Activated CD4-positive, alpha-beta T cell treated with anti-CD3 and anti-CD28 coated beads for 36 hours (primary cell): ENCODE measurements at regions of chr3 and their contacts with region 1.

Region 1: GRCh38 chr3:186540221-186540834 is 3.9 kb downstream of the CRYGS start:
- DNase-seq: peak; percentile 89
- ATAC-seq: peak; percentile 66
- H3K4me3 Mint-ChIP-seq: no peak overlapping the region
- H3K27ac Mint-ChIP-seq: peak overlapping the region; percentile 64
- H3K4me1 Mint-ChIP-seq: peaks cover 63% of the 10 kb centered on the region
- H3K27me3 Mint-ChIP-seq: no peaks in the 10 kb centered on the region

Region 2: GRCh38 chr3:185942907-185943759 is 597.2 kb before region 1 on chr3:
- CTCF ChIA-PET with region 1: interaction called, 36 read pairs
- POLR2A ChIA-PET with region 1: interaction called, 3 read pairs
- intact Hi-C with region 1: no loop called
- DNase-seq: peak; percentile 92
- ATAC-seq: peak; percentile 96
- H3K4me3 Mint-ChIP-seq: no peak overlapping the region
- H3K27ac Mint-ChIP-seq: no peak overlapping the region
- H3K4me1 Mint-ChIP-seq: peaks cover 22% of the 10 kb centered on the region
- H3K27me3 Mint-ChIP-seq: peaks cover 4% of the 10 kb centered on the region

Region 3: DNA sequence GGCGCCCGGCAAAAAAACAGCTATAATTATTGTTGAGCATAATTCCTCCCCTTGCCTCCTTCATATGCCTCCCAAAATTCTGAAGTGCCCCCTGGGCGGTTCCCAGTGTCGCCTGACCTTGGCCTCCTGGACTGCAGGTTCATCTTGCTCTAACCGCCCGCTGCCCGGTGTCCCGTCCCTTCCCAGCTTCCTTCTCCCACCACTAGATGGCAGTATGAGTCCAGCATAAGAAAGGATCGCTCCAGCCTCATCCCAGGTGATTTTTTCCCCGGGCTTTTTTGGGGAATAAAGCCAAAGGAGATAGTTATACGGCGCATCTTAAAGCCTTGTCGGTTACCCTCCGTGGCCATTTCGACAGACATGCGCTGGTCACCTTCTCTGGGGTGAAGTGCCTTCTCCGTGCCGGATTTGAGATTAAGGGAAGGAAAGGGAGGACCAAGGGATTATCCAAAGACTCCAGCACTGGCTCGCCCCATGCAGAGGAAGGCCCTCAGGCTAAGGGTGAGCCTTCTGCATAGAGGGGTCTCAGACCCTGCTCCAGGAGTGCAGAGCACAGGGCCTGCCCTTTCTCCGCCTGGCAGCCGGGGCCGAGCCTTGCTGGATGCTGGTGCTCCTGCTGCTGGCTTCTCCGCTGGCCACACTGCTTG is 556.7 kb before region 1 on chr3:
- CTCF ChIA-PET with region 1: interaction called, 38 read pairs
- POLR2A ChIA-PET with region 1: no interaction called
- intact Hi-C with region 1: loop called (anchors 1 kb)
- DNase-seq: peak; percentile 71
- ATAC-seq: peak; percentile 83
- H3K4me3 Mint-ChIP-seq: no peak overlapping the region
- H3K27ac Mint-ChIP-seq: no peak overlapping the region
- H3K4me1 Mint-ChIP-seq: peaks cover 4% of the 10 kb centered on the region
- H3K27me3 Mint-ChIP-seq: peaks cover 7% of the 10 kb centered on the region

Region 4: DNA sequence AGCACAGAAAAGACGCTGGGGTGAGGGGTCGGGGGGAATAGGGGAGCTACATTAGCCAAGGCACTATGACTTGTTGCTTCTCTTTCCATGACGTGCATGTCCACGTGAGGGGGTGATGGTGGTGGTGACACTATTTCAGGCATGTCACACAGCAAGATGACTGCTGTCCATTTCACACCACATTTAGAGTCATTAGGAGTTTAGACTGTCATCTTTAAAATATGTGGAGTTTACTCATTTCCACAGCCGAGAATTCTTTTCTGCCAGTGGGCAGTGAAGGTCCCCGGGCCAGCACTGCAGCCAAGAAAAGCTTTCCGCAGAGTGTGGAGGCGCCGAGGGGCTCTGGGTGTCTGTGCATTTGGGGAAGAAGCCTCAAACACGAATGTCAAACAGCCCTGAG is 177.3 kb before region 1 on chr3:
- CTCF ChIA-PET with region 1: interaction called, 10 read pairs
- POLR2A ChIA-PET with region 1: no interaction called
- intact Hi-C with region 1: no loop called
- DNase-seq: no peak
- ATAC-seq: no peak
- H3K4me3 Mint-ChIP-seq: no peak overlapping the region
- H3K27ac Mint-ChIP-seq: no peak overlapping the region
- H3K4me1 Mint-ChIP-seq: peaks cover 11% of the 10 kb centered on the region
- H3K27me3 Mint-ChIP-seq: peaks cover 50% of the 10 kb centered on the region

Region 5: GRCh38 chr3:186496016-186496415 is 44.3 kb before region 1 on chr3:
- CTCF ChIA-PET with region 1: interaction called, 11 read pairs
- POLR2A ChIA-PET with region 1: no interaction called
- intact Hi-C with region 1: no loop called
- DNase-seq: no peak
- ATAC-seq: no peak
- H3K4me3 Mint-ChIP-seq: no peak overlapping the region
- H3K27ac Mint-ChIP-seq: no peak overlapping the region
- H3K4me1 Mint-ChIP-seq: no peaks in the 10 kb centered on the region
- H3K27me3 Mint-ChIP-seq: no peaks in the 10 kb centered on the region

Region 6: GRCh38 chr3:186520957-186521842 is 19.1 kb before region 1 on chr3:
- CTCF ChIA-PET with region 1: interaction called, 59 read pairs
- POLR2A ChIA-PET with region 1: interaction called, 27 read pairs
- intact Hi-C with region 1: no loop called
- DNase-seq: peak; percentile 85
- ATAC-seq: peak; percentile 68
- H3K4me3 Mint-ChIP-seq: peak overlapping the region; percentile 55
- H3K27ac Mint-ChIP-seq: peak overlapping the region; percentile 71
- H3K4me1 Mint-ChIP-seq: peaks cover 60% of the 10 kb centered on the region
- H3K27me3 Mint-ChIP-seq: no peaks in the 10 kb centered on the region

Region 7: DNA sequence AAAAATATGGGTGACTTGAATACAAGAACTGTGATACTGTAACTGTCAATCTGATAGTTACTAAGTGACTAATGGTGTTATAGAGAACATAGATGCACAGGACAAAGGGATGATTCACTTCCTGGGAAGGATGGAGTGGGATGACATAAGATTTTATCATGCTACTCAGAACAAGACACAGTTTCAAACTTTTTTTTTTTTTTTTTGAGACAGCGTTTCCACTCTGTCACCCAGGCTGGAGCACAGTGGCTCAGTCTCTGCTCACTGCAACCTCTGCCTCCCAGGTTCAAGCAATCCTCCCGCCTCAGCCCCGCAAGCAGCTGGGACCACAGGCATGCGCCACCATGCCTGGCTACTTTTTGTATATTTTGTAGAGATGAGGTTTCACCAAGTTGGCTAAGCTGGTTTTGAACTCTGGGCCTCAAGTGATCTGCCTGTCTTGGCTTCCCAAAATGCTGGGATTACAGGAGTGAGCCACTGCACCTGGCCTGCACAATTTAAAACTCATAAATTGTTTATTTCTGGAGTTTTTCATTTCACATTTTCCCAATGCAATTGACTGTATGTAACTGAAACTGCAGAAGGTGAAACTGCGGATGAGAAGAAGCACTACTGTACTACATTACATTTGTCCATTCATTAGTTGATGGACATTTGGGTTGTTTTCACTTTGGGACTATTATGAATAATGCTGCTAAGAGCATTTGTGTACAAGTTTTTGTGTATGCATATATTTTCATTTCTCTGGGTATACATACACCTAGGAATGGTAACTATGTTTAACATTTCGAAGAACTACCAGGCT is 342.8 kb after region 1 on chr3:
- CTCF ChIA-PET with region 1: no interaction called
- POLR2A ChIA-PET with region 1: no interaction called
- intact Hi-C with region 1: loop called in 1 of 2 experiments (anchors 1 kb)
- DNase-seq: peak; percentile 78
- ATAC-seq: peak; percentile 85
- H3K4me3 Mint-ChIP-seq: peak overlapping the region; percentile 20
- H3K27ac Mint-ChIP-seq: peak overlapping the region; percentile 90
- H3K4me1 Mint-ChIP-seq: peaks cover 62% of the 10 kb centered on the region
- H3K27me3 Mint-ChIP-seq: no peaks in the 10 kb centered on the region